Upper lobe of right lung (tissue), 1 donor: ENCODE measurements at regions of chr19 and their contacts with region 1.

Region 1: DNA sequence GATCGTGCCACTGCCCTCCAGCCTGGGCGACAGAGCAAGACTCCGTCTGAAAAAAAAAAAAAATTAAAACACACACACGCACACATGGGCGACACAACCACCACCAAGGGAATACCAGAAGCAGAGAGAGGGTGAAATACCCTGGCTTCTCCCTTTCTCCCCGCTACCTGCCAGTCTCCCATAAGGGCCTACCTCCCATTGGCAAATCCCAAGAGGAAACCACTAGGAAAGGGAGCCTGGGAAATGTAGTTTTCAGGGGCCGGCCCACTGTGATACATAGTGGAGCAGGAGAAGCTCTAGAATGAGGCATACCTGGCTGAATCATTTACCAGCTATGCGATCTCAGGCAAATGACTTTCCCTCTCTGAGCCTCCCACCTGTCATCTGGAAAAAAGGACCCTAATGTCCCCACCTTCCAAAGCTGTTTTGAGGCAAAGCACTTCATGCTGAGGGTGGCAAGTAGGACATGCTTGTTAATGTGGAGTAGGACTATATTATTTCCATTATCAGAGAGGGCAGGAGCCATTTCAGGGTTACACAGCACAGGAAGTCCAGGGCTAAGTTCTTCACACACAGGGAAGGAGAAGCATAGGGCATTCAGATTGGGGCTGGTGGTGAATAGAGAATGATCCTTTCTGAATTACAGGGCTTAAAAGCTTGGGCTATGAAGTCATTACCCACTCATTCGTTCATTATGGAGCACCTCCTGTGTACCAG is 14.3 kb upstream of the HNRNPUL1 start:
- DNase-seq: no peak
- ATAC-seq: no peak
- H3K4me3 ChIP-seq: no peak overlapping the region
- H3K27ac ChIP-seq: no peak overlapping the region
- H3K4me1 ChIP-seq: no peaks in the 10 kb centered on the region
- H3K27me3 ChIP-seq: no peaks in the 10 kb centered on the region
- CTCF ChIP-seq: no peak

Region 2: GRCh38 chr19:41206926-41207750 is 42.7 kb before region 1 on chr19:
- intact Hi-C with region 1: loop called (anchors 10 kb)
- DNase-seq: peak; percentile 67
- ATAC-seq: peak; percentile 40
- H3K4me3 ChIP-seq: no peak overlapping the region
- H3K27ac ChIP-seq: peak overlapping the region; percentile 24
- H3K4me1 ChIP-seq: no peaks in the 10 kb centered on the region
- H3K27me3 ChIP-seq: no peaks in the 10 kb centered on the region
- CTCF ChIP-seq: no peak

Region 3: DNA sequence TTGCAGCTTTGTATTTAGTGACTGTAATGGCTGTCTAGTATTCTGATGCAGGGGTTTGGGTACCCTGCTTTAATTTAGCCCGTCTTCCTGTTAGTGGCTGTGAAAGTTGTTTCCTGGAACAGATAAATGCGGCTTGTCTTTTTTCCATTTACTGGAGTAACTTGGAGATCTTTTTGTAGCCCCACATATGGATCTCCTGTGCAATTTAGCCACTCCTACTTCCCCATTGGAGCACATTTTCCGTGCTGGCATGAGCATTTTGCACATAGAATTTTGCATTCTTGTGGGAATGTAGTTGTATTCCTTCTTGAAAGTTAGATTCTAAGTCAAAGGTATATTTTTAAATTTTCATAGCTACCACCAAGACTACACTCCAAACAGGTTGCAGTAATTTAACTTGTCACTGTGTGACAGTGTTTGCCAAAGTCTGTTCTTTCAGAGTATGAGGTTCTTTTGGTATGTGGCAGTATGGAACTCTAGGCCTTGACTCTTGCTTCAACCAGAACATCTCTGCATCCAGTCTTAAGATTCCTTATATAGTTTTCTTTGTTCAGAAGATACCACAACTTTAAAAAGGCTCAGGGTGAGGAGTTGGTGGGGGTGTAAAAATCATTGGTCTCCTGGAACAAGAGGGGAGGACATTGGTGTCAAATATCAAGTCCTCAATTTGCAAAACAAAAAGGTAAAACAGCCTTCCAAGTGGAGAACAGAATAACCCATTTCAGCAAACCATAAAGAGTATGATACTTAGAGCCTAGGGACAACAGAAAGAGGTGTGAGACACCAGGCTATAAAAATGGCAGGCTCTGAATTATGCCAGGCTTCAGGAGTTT is 39.0 kb after region 1 on chr19:
- intact Hi-C with region 1: no loop called
- DNase-seq: no peak
- ATAC-seq: no peak
- H3K4me3 ChIP-seq: no peak overlapping the region
- H3K27ac ChIP-seq: no peak overlapping the region
- H3K4me1 ChIP-seq: no peaks in the 10 kb centered on the region
- H3K27me3 ChIP-seq: no peaks in the 10 kb centered on the region
- CTCF ChIP-seq: no peak